IMR-90 (cell line): ENCODE measurements at regions of chr1 and their contacts with region 1.

Region 1: DNA sequence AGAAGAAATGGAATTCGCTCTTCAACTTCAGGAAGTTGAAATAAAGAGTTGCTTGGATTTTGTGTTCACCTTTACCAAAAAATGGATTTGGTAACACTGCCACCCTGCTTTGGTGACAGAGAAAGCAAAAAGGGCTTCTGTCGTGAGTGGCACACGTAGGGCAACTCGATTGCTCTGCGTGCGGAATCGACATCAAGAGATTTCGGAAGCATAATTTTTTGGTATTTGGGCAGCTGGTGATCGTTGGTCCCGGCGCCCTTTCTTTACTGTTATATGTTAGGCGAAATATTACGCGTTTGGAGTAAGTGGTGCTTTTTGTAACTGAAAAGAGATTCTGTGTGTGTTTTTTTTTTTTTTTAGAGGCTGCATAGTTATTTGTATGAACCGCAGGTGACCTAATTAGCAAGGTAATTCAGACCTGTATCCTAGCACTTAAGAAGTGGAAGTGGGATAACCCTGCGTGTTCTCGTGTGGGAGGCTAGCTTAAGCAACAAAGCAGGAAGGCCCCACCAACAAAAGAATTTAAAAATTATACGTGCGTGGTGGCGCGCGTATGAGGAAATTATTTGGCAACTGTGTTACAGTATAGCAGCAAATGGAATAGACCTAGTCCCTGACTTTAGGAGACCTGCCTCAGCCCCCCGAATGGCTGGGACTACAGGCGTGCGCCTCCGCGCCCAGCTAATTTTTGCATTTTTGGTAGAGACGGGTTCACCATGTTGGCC is at the start of gene RNU11:
- DNase-seq: peak; percentile 100
- ATAC-seq: peak; percentile 72
- H3K4me3 ChIP-seq: peak within 1 kb of the TSS; percentile 28
- H3K27ac ChIP-seq: peak within 1 kb of the TSS; percentile 79
- H3K4me1 ChIP-seq: peaks cover 1% of the 10 kb centered on the region
- H3K27me3 ChIP-seq: no peaks in the 10 kb centered on the region
- CTCF ChIP-seq: no peak
- POLR2A ChIP-seq: peak; percentile 100
- RAD21 ChIP-seq: peak; percentile 15; the same call in 1 of the 2 replicates
- total RNA-seq, gene RNU11: under 0.01 TPM in 1 of 2 replicates, not detected in the other

Region 2: GRCh38 chr1:28551381-28551780 is 97.3 kb before region 1 on chr1:
- CTCF ChIA-PET with region 1: no interaction called
- POLR2A ChIA-PET with region 1: no interaction called
- dilution Hi-C with region 1: no loop called
- in situ Hi-C with region 1: no loop called
- intact Hi-C with region 1: no loop called
- DNase-seq: no peak
- ATAC-seq: no peak
- H3K4me3 ChIP-seq: no peak overlapping the region
- H3K27ac ChIP-seq: no peak overlapping the region
- H3K4me1 ChIP-seq: no peaks in the 10 kb centered on the region
- H3K27me3 ChIP-seq: no peaks in the 10 kb centered on the region
- CTCF ChIP-seq: no peak
- POLR2A ChIP-seq: no peak
- RAD21 ChIP-seq: no peak

Region 3: GRCh38 chr1:28756846-28757245 is 108.2 kb after region 1 on chr1:
- CTCF ChIA-PET with region 1: no interaction called
- POLR2A ChIA-PET with region 1: no interaction called
- dilution Hi-C with region 1: no loop called
- in situ Hi-C with region 1: no loop called
- intact Hi-C with region 1: loop called (anchors 2 kb)
- DNase-seq: no peak
- ATAC-seq: no peak; the same call in 1 of the 2 replicates
- H3K4me3 ChIP-seq: no peak overlapping the region
- H3K27ac ChIP-seq: peak overlapping the region; percentile 84; the same call in 1 of the 2 replicates
- H3K4me1 ChIP-seq: peaks cover 15% of the 10 kb centered on the region
- H3K27me3 ChIP-seq: no peaks in the 10 kb centered on the region
- CTCF ChIP-seq: peak; percentile 17; the same call in 1 of the 2 replicates
- POLR2A ChIP-seq: no peak
- RAD21 ChIP-seq: no peak

Region 4: GRCh38 chr1:28971980-28972771 is 323.5 kb after region 1 on chr1:
- CTCF ChIA-PET with region 1: no interaction called
- POLR2A ChIA-PET with region 1: no interaction called
- dilution Hi-C with region 1: no loop called
- in situ Hi-C with region 1: no loop called
- intact Hi-C with region 1: no loop called
- DNase-seq: peak; percentile 96
- ATAC-seq: peak; percentile 91
- H3K4me3 ChIP-seq: no peak overlapping the region
- H3K27ac ChIP-seq: peak overlapping the region; percentile 61
- H3K4me1 ChIP-seq: peaks cover 4% of the 10 kb centered on the region
- H3K27me3 ChIP-seq: no peaks in the 10 kb centered on the region
- CTCF ChIP-seq: no peak
- POLR2A ChIP-seq: no peak
- RAD21 ChIP-seq: no peak